WTC11 (cell line): ENCODE measurements at regions of chr19 and their contacts with region 1.

Region 1: GRCh38 chr19:43532962-43533545 is at the start of gene ZNF575:
- DNase-seq: peak; percentile 96
- ATAC-seq: peak; percentile 68
- H3K4me3 Mint-ChIP-seq: peak within 1 kb of the TSS; percentile 95
- H3K27ac Mint-ChIP-seq: peak within 1 kb of the TSS; percentile 100
- H3K4me1 Mint-ChIP-seq: peaks cover 18% of the 10 kb centered on the region
- H3K27me3 Mint-ChIP-seq: peaks cover 25% of the 10 kb centered on the region
- CTCF ChIP-seq: peak; percentile 16; the same call in 1 of the 2 replicates
- total RNA-seq, gene ZNF575: 0.13 to 0.25 TPM in 2 of 3 replicates, not detected in the other

Region 2: GRCh38 chr19:43463381-43464136 is 69.5 kb before region 1 on chr19:
- CTCF ChIA-PET with region 1: interaction called, 22 read pairs
- POLR2A ChIA-PET with region 1: interaction called, 6 read pairs
- DNase-seq: peak; percentile 99
- ATAC-seq: peak; percentile 89
- H3K4me3 Mint-ChIP-seq: peak overlapping the region; percentile 91
- H3K27ac Mint-ChIP-seq: peak overlapping the region; percentile 99
- H3K4me1 Mint-ChIP-seq: peaks cover 14% of the 10 kb centered on the region
- H3K27me3 Mint-ChIP-seq: peaks cover 71% of the 10 kb centered on the region
- CTCF ChIP-seq: no peak

Region 3: DNA sequence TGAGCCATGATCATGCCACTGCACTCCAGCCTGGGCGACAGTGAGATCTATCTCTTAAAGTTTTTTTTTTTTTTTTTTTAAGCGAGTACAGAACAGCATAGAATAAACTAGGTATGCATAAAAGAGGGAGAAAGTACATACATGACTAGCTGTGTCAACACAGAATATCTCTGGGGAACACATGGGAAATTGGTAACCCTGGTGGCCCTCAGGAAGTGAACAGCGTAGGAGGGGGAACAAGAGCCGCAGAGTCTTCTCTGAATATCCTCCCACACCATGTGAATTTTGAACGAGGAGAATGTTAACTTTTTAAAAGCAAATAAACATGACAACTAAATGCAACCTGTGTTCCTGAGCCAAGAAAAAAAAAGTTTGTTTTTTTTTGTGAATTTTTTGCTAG is 43.7 kb before region 1 on chr19:
- CTCF ChIA-PET with region 1: no interaction called
- POLR2A ChIA-PET with region 1: no interaction called
- DNase-seq: no peak
- ATAC-seq: no peak
- H3K4me3 Mint-ChIP-seq: no peak overlapping the region
- H3K27ac Mint-ChIP-seq: no peak overlapping the region; the same call in 1 of the 2 replicates
- H3K4me1 Mint-ChIP-seq: no peaks in the 10 kb centered on the region
- H3K27me3 Mint-ChIP-seq: no peaks in the 10 kb centered on the region; the same call in 1 of the 2 replicates
- CTCF ChIP-seq: no peak

Region 4: DNA sequence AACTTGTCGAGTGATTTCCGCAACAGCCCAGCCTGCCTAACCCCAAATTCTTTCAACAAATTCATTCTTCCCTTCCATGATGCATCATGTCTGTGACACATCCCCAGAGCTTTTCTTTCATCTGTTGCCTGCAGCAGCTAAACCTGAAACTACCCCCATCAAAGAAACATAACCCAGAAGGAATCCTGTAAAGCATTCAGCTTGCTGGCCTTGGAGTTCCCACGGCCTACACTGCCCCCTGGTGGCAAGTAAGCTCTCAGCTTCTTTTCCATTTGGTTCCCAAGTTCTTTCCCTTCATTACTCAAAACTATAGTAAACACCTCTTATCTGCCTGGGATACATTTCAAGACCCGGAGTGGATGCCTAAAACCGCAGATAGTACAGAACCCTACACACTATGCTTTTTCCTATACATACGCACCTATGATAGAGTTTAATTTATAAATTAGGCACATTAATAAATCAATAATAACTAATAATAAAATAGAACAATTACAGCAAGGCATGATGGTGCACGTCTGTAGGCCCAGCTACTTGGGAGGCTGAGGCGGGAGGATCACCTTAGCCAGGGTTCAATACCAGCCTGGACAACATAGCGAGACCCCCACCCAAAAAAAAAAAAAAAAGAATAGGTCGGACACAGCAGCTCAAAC is 13.5 kb before region 1 on chr19:
- CTCF ChIA-PET with region 1: interaction called, 25 read pairs
- POLR2A ChIA-PET with region 1: interaction called, 6 read pairs
- DNase-seq: peak; percentile 83
- ATAC-seq: no peak; the same call in 1 of the 2 replicates
- H3K4me3 Mint-ChIP-seq: no peak overlapping the region
- H3K27ac Mint-ChIP-seq: peak overlapping the region; percentile 32; the same call in 1 of the 2 replicates
- H3K4me1 Mint-ChIP-seq: peaks cover 3% of the 10 kb centered on the region
- H3K27me3 Mint-ChIP-seq: no peaks in the 10 kb centered on the region
- CTCF ChIP-seq: peak; percentile 92

Region 5: DNA sequence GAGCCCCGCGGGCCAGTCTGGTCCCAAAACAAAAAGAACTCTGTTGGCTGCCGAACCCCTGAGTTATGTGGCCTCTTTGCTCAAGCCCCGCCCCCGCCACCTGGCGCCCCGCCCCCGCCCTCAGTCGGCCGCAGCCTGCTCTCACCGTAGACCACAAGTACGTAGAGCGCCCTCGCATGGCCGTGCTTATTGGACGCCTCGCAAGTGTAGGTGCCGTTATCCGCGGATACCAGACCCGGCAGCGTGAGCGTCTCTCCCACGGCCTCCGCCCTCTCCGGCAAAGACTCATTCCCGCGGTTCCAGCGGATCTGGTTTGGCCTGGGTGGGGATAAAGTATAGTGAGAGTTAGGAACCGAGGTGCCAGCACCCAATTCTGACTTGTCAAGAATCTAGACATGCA is 91.9 kb after region 1 on chr19:
- CTCF ChIA-PET with region 1: interaction called, 18 read pairs
- POLR2A ChIA-PET with region 1: no interaction called
- DNase-seq: peak; percentile 98
- ATAC-seq: peak; percentile 82
- H3K4me3 Mint-ChIP-seq: peak overlapping the region; percentile 47
- H3K27ac Mint-ChIP-seq: peak overlapping the region; percentile 97
- H3K4me1 Mint-ChIP-seq: peaks cover 26% of the 10 kb centered on the region
- H3K27me3 Mint-ChIP-seq: peaks cover 34% of the 10 kb centered on the region
- CTCF ChIP-seq: no peak

Region 6: GRCh38 chr19:43662487-43662886 is 129.4 kb after region 1 on chr19:
- CTCF ChIA-PET with region 1: interaction called, 28 read pairs
- POLR2A ChIA-PET with region 1: no interaction called
- DNase-seq: no peak
- ATAC-seq: peak; percentile 79
- H3K4me3 Mint-ChIP-seq: no peak overlapping the region
- H3K27ac Mint-ChIP-seq: no peak overlapping the region; the same call in 1 of the 2 replicates
- H3K4me1 Mint-ChIP-seq: peaks cover 6% of the 10 kb centered on the region
- H3K27me3 Mint-ChIP-seq: peaks cover 8% of the 10 kb centered on the region
- CTCF ChIP-seq: peak; percentile 19; the same call in 1 of the 2 replicates

Region 7: DNA sequence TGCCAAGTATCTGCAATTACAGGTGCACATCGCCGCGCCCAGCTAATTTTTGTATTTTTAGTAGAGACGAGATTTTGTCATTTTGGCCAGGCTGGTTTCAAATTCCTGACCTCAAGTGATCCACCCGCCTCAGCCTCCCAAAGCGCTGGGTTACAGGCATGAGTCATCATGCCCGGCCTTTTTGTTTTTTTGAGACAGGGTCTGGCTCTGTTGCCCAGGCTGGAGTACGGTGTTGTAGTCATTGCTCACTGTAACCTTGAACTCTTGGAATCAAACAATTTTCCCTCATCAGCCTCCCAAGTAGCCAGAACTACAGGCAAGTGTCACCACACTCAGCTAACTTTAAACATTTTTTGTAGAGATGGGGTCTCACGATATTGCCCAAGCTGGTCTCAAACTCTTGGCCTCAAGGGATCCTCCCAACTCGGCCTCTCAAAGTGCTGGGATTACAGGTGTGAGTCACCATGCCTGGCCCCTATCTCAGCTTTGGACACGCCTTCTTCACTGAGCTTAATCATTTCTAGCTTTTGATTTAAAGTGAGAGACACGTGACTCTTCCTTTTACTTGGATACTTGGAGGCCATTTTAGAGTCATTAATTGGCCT is 178.8 kb after region 1 on chr19:
- CTCF ChIA-PET with region 1: no interaction called
- POLR2A ChIA-PET with region 1: no interaction called
- DNase-seq: no peak
- ATAC-seq: no peak
- H3K4me3 Mint-ChIP-seq: no peak overlapping the region
- H3K27ac Mint-ChIP-seq: no peak overlapping the region
- H3K4me1 Mint-ChIP-seq: no peaks in the 10 kb centered on the region
- H3K27me3 Mint-ChIP-seq: peaks cover 10% of the 10 kb centered on the region
- CTCF ChIP-seq: no peak